ENCODE measurements at regions of chr22 and their contacts with region 1.

Region 1: GRCh38 chr22:46280999-46281623 is 13.3 kb downstream of the TTC38 start:
- DNase-seq: no peak
- H3K4me3 ChIP-seq: no peak overlapping the region
- H3K27ac ChIP-seq: no peak overlapping the region
- H3K4me1 ChIP-seq: no peaks in the 10 kb centered on the region
- H3K27me3 ChIP-seq: no peaks in the 10 kb centered on the region
- CTCF ChIP-seq: no peak

Region 2: GRCh38 chr22:46346680-46347405 is 65.7 kb after region 1 on chr22:
- CTCF ChIA-PET with region 1: no interaction called
- POLR2A ChIA-PET with region 1: interaction called, 21 read pairs
- intact Hi-C with region 1: no loop called
- DNase-seq: no peak
- H3K4me3 ChIP-seq: no peak overlapping the region
- H3K27ac ChIP-seq: no peak overlapping the region
- H3K4me1 ChIP-seq: no peaks in the 10 kb centered on the region
- H3K27me3 ChIP-seq: no peaks in the 10 kb centered on the region
- CTCF ChIP-seq: no peak

Measured in A673 (cell line).